Naive thymus-derived CD4-positive, alpha-beta T cell (primary cell): ENCODE measurements at regions of chr1 and their contacts with region 1.

Region 1: DNA sequence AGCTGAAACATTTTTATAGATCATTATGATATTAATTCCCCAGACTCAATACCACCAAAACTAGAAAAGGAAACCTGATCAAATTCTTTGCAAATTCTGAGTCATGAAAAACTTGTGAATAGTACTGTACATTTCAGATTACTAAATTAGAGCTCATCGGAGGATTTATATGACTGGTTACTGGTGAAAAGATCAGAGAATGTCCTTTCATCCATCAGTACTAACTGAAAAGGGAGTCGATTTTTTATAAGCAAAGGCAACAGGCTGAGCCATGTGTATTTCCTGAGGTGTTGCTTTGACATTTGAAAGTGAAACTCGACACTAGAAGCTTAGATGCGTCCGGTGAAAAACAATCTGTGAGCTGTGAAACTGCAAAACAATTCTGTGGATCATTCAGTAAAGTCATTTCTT is 155.7 kb downstream of the TNFSF18 start:
- DNase-seq: peak in 7 of 9 donors; percentile 10 to 56 (median 38)
- ATAC-seq: peak; percentile 85
- H3K4me3 ChIP-seq: peak overlapping the region; percentile 41
- H3K4me3 Mint-ChIP-seq: peak overlapping the region; percentile 35 to 87 (median 81)
- H3K27ac ChIP-seq: peak overlapping the region; percentile 55
- H3K27ac Mint-ChIP-seq: peak overlapping the region; percentile 79 to 97 (median 88)
- H3K4me1 ChIP-seq: peaks cover 11 to 21% of the 10 kb centered on the region in 2 donors
- H3K4me1 Mint-ChIP-seq: peaks cover 19 to 58% (median 47%) of the 10 kb centered on the region in 7 donors
- H3K27me3 ChIP-seq: no peaks in the 10 kb centered on the region
- H3K27me3 Mint-ChIP-seq: peaks cover 0 to 39% (median 0%) of the 10 kb centered on the region in 5 donors

Region 2: GRCh38 chr1:172870901-172871606 is 24.0 kb before region 1 on chr1:
- CTCF ChIA-PET with region 1: no interaction called
- POLR2A ChIA-PET with region 1: no interaction called
- intact Hi-C with region 1: loop called (anchors 2 kb)
- DNase-seq: no peak
- ATAC-seq: no peak
- H3K4me3 ChIP-seq: no peak overlapping the region
- H3K4me3 Mint-ChIP-seq: no peak overlapping the region
- H3K27ac ChIP-seq: no peak overlapping the region
- H3K27ac Mint-ChIP-seq: no peak overlapping the region
- H3K4me1 ChIP-seq: peaks cover 0 to 9% of the 10 kb centered on the region in 2 donors
- H3K4me1 Mint-ChIP-seq: peaks cover 5 to 36% (median 26%) of the 10 kb centered on the region in 7 donors
- H3K27me3 ChIP-seq: no peaks in the 10 kb centered on the region
- H3K27me3 Mint-ChIP-seq: peaks cover 0 to 44% (median 0%) of the 10 kb centered on the region in 5 donors

Region 3: GRCh38 chr1:172883107-172883791 is 11.8 kb before region 1 on chr1:
- CTCF ChIA-PET with region 1: no interaction called
- POLR2A ChIA-PET with region 1: interaction called, 3 read pairs
- intact Hi-C with region 1: loop called in 1 of 2 experiments (anchors 1 kb)
- DNase-seq: no peak
- ATAC-seq: no peak
- H3K4me3 ChIP-seq: peak overlapping the region; percentile 11
- H3K4me3 Mint-ChIP-seq: peak overlapping the region in 5 of 10 donors; percentile 11 to 46 (median 22)
- H3K27ac ChIP-seq: no peak overlapping the region
- H3K27ac Mint-ChIP-seq: peak overlapping the region in 2 of 9 donors; percentile 12 to 22
- H3K4me1 ChIP-seq: peaks cover 0 to 12% of the 10 kb centered on the region in 2 donors
- H3K4me1 Mint-ChIP-seq: peaks cover 0 to 17% (median 10%) of the 10 kb centered on the region in 7 donors
- H3K27me3 ChIP-seq: no peaks in the 10 kb centered on the region
- H3K27me3 Mint-ChIP-seq: peaks cover 0 to 80% (median 0%) of the 10 kb centered on the region in 5 donors

Region 4: GRCh38 chr1:172906778-172907592 is 11.9 kb after region 1 on chr1:
- CTCF ChIA-PET with region 1: interaction called, 4 read pairs
- POLR2A ChIA-PET with region 1: interaction called, 9 read pairs
- intact Hi-C with region 1: loop called in 1 of 2 experiments (anchors 1 kb)
- DNase-seq: peak in 7 of 9 donors; percentile 19 to 58 (median 40)
- ATAC-seq: peak; percentile 77
- H3K4me3 ChIP-seq: no peak overlapping the region
- H3K4me3 Mint-ChIP-seq: peak overlapping the region in 9 of 10 donors; percentile 4 to 75 (median 50)
- H3K27ac ChIP-seq: no peak overlapping the region
- H3K27ac Mint-ChIP-seq: peak overlapping the region; percentile 26 to 83 (median 59)
- H3K4me1 ChIP-seq: peaks cover 10 to 15% of the 10 kb centered on the region in 2 donors
- H3K4me1 Mint-ChIP-seq: peaks cover 15 to 41% (median 26%) of the 10 kb centered on the region in 7 donors
- H3K27me3 ChIP-seq: no peaks in the 10 kb centered on the region
- H3K27me3 Mint-ChIP-seq: peaks cover 0 to 21% (median 0%) of the 10 kb centered on the region in 5 donors